Calu3 (cell line): ENCODE measurements at regions of chr11 and their contacts with region 1.

Region 1: GRCh38 chr11:18775492-18776292 is 15.9 kb downstream of the PTPN5 start:
- DNase-seq: peak; percentile 85
- H3K4me3 Mint-ChIP-seq: no peak overlapping the region
- H3K27ac Mint-ChIP-seq: no peak overlapping the region
- H3K4me1 Mint-ChIP-seq: peaks cover 6% of the 10 kb centered on the region
- H3K27me3 Mint-ChIP-seq: peaks cover 28% of the 10 kb centered on the region
- CTCF ChIP-seq: peak; percentile 74

Region 2: DNA sequence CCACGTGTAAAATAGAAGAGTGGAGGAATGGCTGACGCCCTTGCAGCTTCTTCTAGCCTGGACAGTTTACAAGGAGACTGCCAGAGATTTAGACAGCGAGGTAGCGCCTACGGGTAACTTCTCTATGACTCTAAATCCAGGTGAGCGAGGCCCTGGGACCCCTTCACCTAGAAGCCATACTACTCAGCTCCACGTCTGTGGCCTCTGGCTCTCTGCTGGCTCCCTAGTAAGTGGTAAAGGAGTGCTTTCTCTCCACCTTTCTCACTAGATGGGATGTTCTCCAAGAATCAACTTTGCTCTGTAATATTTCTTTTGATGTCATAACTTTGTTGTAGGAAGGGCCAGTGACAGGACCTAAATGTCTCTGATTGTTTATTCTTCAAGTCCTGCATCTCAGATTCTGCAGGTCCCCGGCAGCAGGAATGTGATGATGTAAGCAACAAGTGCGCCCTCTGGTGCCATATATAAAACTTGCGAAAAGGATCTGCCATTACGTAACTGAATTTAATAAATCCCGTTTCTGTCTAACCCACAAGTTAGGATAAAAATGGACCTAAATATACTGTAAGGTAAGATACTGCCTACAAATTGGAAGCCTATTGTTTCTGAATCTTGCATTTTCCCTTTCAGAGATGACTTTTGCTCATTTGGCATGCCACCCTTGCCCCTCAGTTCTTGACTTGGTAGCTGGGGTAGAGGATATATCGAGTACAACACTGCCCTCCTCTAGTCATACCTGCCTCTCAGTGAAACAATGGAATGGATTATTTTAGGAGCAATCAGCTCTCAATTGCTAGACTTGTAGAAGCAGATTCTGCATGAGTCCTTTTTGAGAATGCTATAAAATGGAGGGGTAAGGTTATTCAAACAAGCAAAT is 26.9 kb after region 1 on chr11:
- CTCF ChIA-PET with region 1: no interaction called
- intact Hi-C with region 1: loop called (anchors 1 kb)
- DNase-seq: peak; percentile 65
- H3K4me3 Mint-ChIP-seq: no peak overlapping the region
- H3K27ac Mint-ChIP-seq: no peak overlapping the region
- H3K4me1 Mint-ChIP-seq: no peaks in the 10 kb centered on the region
- H3K27me3 Mint-ChIP-seq: peaks cover 97% of the 10 kb centered on the region
- CTCF ChIP-seq: peak; percentile 24

Region 3: GRCh38 chr11:18853086-18853720 is 77.5 kb after region 1 on chr11:
- CTCF ChIA-PET with region 1: interaction called, 4 read pairs
- intact Hi-C with region 1: loop called (anchors 1 kb)
- DNase-seq: peak; percentile 24
- H3K4me3 Mint-ChIP-seq: no peak overlapping the region
- H3K27ac Mint-ChIP-seq: no peak overlapping the region
- H3K4me1 Mint-ChIP-seq: peaks cover 10% of the 10 kb centered on the region
- H3K27me3 Mint-ChIP-seq: peaks cover 54% of the 10 kb centered on the region
- CTCF ChIP-seq: peak; percentile 53